Heart left ventricle (tissue), 16 donors: ENCODE measurements at regions of chr6 and their contacts with region 1.

Region 1: GRCh38 chr6:42532038-42532669 is 31.7 kb upstream of the UBR2 start:
- DNase-seq: peak in 1 of 5 donors; percentile 14
- ATAC-seq: peak in 1 of 4 donors; percentile 36
- H3K4me3 ChIP-seq: no peak overlapping the region
- H3K27ac ChIP-seq: no peak overlapping the region
- H3K4me1 ChIP-seq: peaks cover 0 to 11% (median 0%) of the 10 kb centered on the region in 12 donors
- H3K27me3 ChIP-seq: no peaks in the 10 kb centered on the region
- CTCF ChIP-seq: peak; percentile 76 to 96 (median 84)
- POLR2A ChIP-seq: no peak

Region 2: DNA sequence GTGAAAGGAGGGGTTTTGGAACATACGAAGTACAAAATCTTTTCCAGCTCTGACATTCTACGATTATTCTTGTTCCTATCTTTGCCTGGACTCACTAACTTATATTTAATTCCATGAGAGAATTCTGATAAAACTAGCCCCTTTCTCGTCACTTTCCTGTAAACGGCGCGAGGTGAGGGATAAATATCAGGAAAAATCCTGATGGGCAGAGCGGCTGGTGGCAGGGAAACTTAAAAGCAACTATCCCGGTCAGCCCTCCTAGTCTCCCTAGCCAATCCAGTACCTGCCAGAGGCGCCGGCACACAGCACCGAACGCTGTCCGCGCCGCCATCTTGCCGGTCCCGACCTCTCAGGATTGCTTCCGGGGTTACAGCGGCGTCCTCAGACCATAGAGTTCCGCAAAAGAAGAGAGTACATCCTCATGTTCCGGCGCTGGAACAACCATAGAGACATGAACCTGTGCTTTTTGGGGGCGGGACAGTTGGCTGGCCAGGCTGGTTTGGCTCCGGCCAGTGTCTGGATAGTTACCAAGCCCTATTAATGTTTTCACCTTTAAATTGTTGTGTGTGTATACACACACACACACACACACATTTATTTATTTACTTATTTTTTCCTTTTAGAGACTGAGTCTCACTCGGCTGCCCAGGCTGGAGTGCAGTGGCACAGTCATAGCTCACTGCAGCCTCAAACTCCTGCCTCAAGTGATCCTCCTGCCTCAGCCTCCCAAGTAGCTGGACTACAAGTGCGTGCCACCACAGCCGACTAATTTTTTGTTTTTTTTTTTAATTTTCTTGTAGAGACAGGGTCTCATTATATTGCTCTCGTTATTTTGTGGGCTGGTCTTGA is 314.4 kb before region 1 on chr6 and contains the start of gene MRPS10:
- intact Hi-C with region 1: loop called in 1 of 10 experiments (anchors 10 kb)
- DNase-seq: peak; percentile 93 to 94 (median 93)
- ATAC-seq: peak; percentile 99 to 100 (median 100)
- H3K4me3 ChIP-seq: peak within 1 kb of the TSS; percentile 49 to 90 (median 80)
- H3K27ac ChIP-seq: peak within 1 kb of the TSS; percentile 53 to 87 (median 80)
- H3K4me1 ChIP-seq: peaks cover 0 to 23% (median 12%) of the 10 kb centered on the region in 12 donors
- H3K27me3 ChIP-seq: no peaks in the 10 kb centered on the region
- CTCF ChIP-seq: peak in 1 of 12 donors; percentile 22
- POLR2A ChIP-seq: peak in 1 of 2 donors; percentile 62
- total RNA-seq, gene MRPS10: 47.5 to 73.5 (median 57.3) TPM

Region 3: GRCh38 chr6:42260972-42261371 is 271.2 kb before region 1 on chr6:
- intact Hi-C with region 1: loop called in 5 of 10 experiments (anchors 2 to 5 kb)
- DNase-seq: no peak
- ATAC-seq: peak; percentile 34 to 79 (median 69)
- H3K4me3 ChIP-seq: peak overlapping the region in 2 of 12 donors; percentile 7 to 13
- H3K27ac ChIP-seq: peak overlapping the region in 4 of 12 donors; percentile 6 to 25 (median 14)
- H3K4me1 ChIP-seq: peaks cover 0 to 48% (median 13%) of the 10 kb centered on the region in 12 donors
- H3K27me3 ChIP-seq: no peaks in the 10 kb centered on the region
- CTCF ChIP-seq: peak; percentile 33 to 64 (median 52)
- POLR2A ChIP-seq: no peak